Common myeloid progenitor, CD34-positive (primary cell): ENCODE measurements at regions of chr3 and their contacts with region 1.

Region 1: DNA sequence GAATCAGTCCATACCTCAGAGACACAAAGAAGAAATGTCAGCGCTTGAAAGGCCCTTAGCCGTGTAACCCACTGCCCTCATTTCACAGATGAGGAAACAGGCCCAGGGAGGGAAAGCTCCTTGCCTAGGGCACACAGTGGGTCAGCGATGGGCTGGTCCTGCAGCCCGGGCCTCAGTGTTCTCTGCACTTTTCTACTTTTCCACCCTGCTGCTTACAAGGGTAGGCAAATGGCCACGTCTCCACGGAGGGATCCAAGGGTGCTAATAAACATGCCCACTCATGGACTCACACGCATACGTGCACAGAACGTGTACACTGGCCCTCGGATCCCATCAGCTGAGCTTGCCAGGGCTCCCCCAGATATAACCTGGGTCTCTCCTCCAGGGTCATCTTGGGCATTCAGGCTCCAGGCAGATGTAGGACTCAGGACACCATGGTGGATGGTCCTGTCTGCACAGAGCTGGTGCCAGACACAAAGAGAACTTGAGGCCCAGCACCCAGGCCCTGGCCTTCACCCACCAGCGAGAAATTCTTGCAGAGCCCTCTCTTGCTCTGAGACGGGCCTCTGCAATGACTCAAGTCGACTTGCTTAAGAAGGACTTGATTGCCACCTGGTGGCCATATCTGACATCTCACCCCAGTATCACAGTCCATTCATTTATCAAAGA is 34.5 kb upstream of the VPS8 start:
- DNase-seq: peak; percentile 94 to 97 (median 96)
- H3K4me3 ChIP-seq: no peak overlapping the region
- H3K27ac ChIP-seq: no peak overlapping the region
- H3K4me1 ChIP-seq: peaks cover 0 to 11% (median 2%) of the 10 kb centered on the region in 4 experiments
- H3K27me3 ChIP-seq: peaks cover 0 to 3% (median 0%) of the 10 kb centered on the region in 5 experiments

Region 2: GRCh38 chr3:184561061-184561912 is 216.2 kb before region 1 on chr3 and contains the start of gene EPHB3:
- CTCF ChIA-PET with region 1: interaction called, 6 read pairs
- POLR2A ChIA-PET with region 1: interaction called, 12 read pairs
- DNase-seq: peak; percentile 96 to 98 (median 98)
- H3K4me3 ChIP-seq: peak within 1 kb of the TSS; percentile 13 to 70 (median 54)
- H3K27ac ChIP-seq: no peak within 1 kb of the TSS
- H3K4me1 ChIP-seq: peaks cover 0 to 17% (median 14%) of the 10 kb centered on the region in 4 experiments
- H3K27me3 ChIP-seq: peaks cover 0 to 65% (median 15%) of the 10 kb centered on the region in 5 experiments

Region 3: GRCh38 chr3:184740524-184741484 is 36.7 kb before region 1 on chr3:
- CTCF ChIA-PET with region 1: interaction called, 14 read pairs
- POLR2A ChIA-PET with region 1: no interaction called
- DNase-seq: peak; percentile 7 to 62 (median 41)
- H3K4me3 ChIP-seq: no peak overlapping the region
- H3K27ac ChIP-seq: no peak overlapping the region
- H3K4me1 ChIP-seq: peaks cover 0 to 4% (median 0%) of the 10 kb centered on the region in 4 experiments
- H3K27me3 ChIP-seq: peaks cover 0 to 1% (median 0%) of the 10 kb centered on the region in 5 experiments

Region 4: GRCh38 chr3:184805351-184806038 is 28.0 kb after region 1 on chr3:
- CTCF ChIA-PET with region 1: interaction called, 19 read pairs
- POLR2A ChIA-PET with region 1: no interaction called
- DNase-seq: peak in 2 of 3 donors; percentile 30 to 33
- H3K4me3 ChIP-seq: no peak overlapping the region
- H3K27ac ChIP-seq: no peak overlapping the region
- H3K4me1 ChIP-seq: peaks cover 6 to 26% (median 12%) of the 10 kb centered on the region in 4 experiments
- H3K27me3 ChIP-seq: no peaks in the 10 kb centered on the region